HCT116 (cell line): ENCODE measurements at regions of chr6 and their contacts with region 1.

Region 1: DNA sequence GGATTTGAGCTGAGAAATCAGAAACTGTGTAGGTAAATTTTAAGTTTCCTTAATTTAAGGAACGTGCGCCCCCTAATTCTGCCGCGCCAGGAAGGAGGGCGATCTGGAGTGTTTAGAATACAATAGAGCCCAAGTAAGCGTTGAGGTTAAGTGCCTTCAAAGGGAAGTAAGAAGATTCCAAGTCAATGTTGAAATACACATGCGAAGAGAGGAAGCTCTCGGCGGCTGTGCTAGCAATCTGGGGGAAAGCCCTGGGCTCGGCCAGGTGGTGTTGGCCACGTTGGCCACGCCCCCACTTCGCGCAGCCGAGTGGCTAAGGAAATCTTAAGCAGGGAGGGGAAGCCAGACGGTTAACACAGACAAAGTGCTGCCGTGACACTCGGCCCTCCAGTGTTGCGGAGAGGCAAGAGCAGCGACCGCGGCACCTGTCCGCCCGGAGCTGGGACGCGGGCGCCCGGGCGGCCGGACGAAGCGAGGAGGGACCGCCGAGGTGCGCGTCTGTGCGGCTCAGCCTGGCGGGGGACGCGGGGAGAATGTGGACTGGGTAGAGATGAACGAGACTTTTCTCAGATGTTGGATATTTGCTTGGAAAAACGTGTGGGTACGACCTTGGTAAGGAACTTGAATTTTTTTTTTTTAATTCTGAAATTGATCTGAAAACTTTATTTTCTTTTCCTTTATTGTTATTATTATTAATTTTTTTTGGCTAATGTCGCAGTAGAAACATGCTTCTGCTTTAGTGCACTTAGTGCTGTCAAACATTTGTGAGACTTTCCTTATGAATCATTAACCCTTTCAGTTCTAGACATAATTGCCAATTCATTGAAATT is at the start of gene PRDM1:
- DNase-seq: peak; percentile 81
- ATAC-seq: peak; percentile 91
- H3K4me3 ChIP-seq: peak within 1 kb of the TSS; percentile 47 to 57
- H3K27ac ChIP-seq: peak within 1 kb of the TSS; percentile 52
- H3K4me1 ChIP-seq: peaks cover 17 to 31% of the 10 kb centered on the region in 2 experiments
- H3K27me3 ChIP-seq: no peaks in the 10 kb centered on the region
- CTCF ChIP-seq: peak in 2 of 3 experiments; percentile 11 to 28; a peak in 1 of 6 replicates
- POLR2A ChIP-seq: no peak
- RAD21 ChIP-seq: peak; percentile 46
- total RNA-seq, gene PRDM1: 3.4 TPM

Region 2: DNA sequence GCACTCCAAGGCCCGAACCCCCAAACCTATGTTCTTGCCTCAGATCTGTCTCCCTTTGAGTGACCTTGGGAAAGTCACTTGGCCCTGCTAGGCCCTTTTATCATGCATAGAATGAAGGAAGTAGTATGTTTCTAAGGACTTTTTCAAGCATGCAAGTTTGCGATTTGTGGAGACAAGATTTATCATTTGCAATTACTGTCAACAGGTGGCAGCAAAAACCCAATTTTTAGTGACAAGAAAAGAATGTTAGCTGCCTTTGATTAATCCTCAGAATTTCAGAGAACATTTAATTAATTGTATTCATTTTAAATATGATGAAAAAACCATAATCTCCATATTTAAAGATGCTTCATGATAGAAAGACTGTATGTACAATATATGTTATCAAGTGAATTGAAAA is 655.0 kb before region 1 on chr6:
- CTCF ChIA-PET with region 1: interaction called, 6 read pairs
- POLR2A ChIA-PET with region 1: no interaction called
- RAD21 ChIA-PET with region 1: no interaction called
- intact Hi-C with region 1: loop called (anchors 2 kb)
- DNase-seq: peak; percentile 51
- ATAC-seq: 0 out of 2 replicates have a peak, but pooled peaks have one; percentile 33
- H3K4me3 ChIP-seq: no peak overlapping the region
- H3K27ac ChIP-seq: no peak overlapping the region
- H3K4me1 ChIP-seq: peaks cover 12 to 31% of the 10 kb centered on the region in 2 experiments; a peak in 3 of 4 replicates
- H3K27me3 ChIP-seq: no peaks in the 10 kb centered on the region
- CTCF ChIP-seq: peak; percentile 45 to 67 (median 51); a peak in 5 of 6 replicates
- POLR2A ChIP-seq: no peak
- RAD21 ChIP-seq: peak; percentile 75

Region 3: GRCh38 chr6:105484238-105485161 is 601.7 kb before region 1 on chr6:
- CTCF ChIA-PET with region 1: interaction called, 4 read pairs
- POLR2A ChIA-PET with region 1: interaction called, 3 read pairs
- RAD21 ChIA-PET with region 1: no interaction called
- intact Hi-C with region 1: loop called (anchors 1 kb)
- DNase-seq: peak; percentile 42
- ATAC-seq: peak; percentile 78
- H3K4me3 ChIP-seq: no peak overlapping the region
- H3K27ac ChIP-seq: no peak overlapping the region
- H3K4me1 ChIP-seq: no peaks in the 10 kb centered on the region
- H3K27me3 ChIP-seq: no peaks in the 10 kb centered on the region
- CTCF ChIP-seq: peak; percentile 70 to 93 (median 78)
- POLR2A ChIP-seq: no peak
- RAD21 ChIP-seq: peak; percentile 88

Region 4: DNA sequence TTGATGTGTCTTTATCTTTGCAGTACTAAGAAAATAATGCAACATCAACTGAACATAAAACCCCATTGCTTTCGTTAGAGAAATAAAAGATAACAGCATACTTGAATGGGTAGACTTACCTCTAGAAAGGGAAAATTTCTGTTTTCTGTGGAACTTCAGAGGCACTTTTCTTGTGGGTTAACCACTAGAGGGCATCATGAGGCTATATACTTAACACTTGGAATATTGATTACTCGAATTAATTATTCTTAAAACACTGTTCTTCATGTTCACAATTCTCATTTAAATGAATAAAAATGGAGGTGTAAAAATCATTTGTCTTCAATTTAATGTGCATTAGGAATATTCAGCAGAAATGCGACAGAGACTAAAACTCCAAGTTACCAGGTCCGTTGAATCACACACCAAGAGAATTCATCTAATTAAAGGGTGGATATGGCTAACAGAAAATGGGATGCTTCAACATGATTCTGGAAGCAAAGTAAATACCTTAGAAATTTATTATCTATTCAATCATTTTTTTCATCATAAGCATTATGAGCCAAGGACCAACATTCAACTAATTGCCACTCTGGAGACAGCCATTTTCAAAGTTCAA is 352.5 kb before region 1 on chr6:
- CTCF ChIA-PET with region 1: interaction called, 4 read pairs
- POLR2A ChIA-PET with region 1: no interaction called
- RAD21 ChIA-PET with region 1: no interaction called
- intact Hi-C with region 1: loop called (anchors 1 kb)
- DNase-seq: peak; percentile 41
- ATAC-seq: peak; percentile 58; the same call in 1 of the 2 replicates
- H3K4me3 ChIP-seq: no peak overlapping the region
- H3K27ac ChIP-seq: no peak overlapping the region
- H3K4me1 ChIP-seq: no peaks in the 10 kb centered on the region
- H3K27me3 ChIP-seq: no peaks in the 10 kb centered on the region
- CTCF ChIP-seq: peak; percentile 69 to 83 (median 80)
- POLR2A ChIP-seq: no peak
- RAD21 ChIP-seq: peak; percentile 87

Region 5: GRCh38 chr6:105992315-105992961 is 93.8 kb before region 1 on chr6:
- CTCF ChIA-PET with region 1: no interaction called
- POLR2A ChIA-PET with region 1: no interaction called
- RAD21 ChIA-PET with region 1: no interaction called
- intact Hi-C with region 1: loop called (anchors 5 kb)
- DNase-seq: no peak
- ATAC-seq: peak; percentile 82
- H3K4me3 ChIP-seq: peak overlapping the region; percentile 47 to 60
- H3K27ac ChIP-seq: no peak overlapping the region
- H3K4me1 ChIP-seq: peaks cover 0 to 34% of the 10 kb centered on the region in 2 experiments; a peak in 2 of 4 replicates
- H3K27me3 ChIP-seq: no peaks in the 10 kb centered on the region
- CTCF ChIP-seq: no peak
- POLR2A ChIP-seq: no peak
- RAD21 ChIP-seq: no peak

Region 6: GRCh38 chr6:106223300-106223930 is 137.2 kb after region 1 on chr6:
- CTCF ChIA-PET with region 1: interaction called, 40 read pairs
- POLR2A ChIA-PET with region 1: no interaction called
- RAD21 ChIA-PET with region 1: interaction called, 4 to 7 read pairs
- intact Hi-C with region 1: loop called (anchors 1 kb)
- DNase-seq: peak; percentile 72
- ATAC-seq: peak; percentile 85
- H3K4me3 ChIP-seq: no peak overlapping the region
- H3K27ac ChIP-seq: no peak overlapping the region
- H3K4me1 ChIP-seq: no peaks in the 10 kb centered on the region
- H3K27me3 ChIP-seq: no peaks in the 10 kb centered on the region
- CTCF ChIP-seq: peak; percentile 60 to 80 (median 62)
- POLR2A ChIP-seq: no peak
- RAD21 ChIP-seq: peak; percentile 89

Region 7: DNA sequence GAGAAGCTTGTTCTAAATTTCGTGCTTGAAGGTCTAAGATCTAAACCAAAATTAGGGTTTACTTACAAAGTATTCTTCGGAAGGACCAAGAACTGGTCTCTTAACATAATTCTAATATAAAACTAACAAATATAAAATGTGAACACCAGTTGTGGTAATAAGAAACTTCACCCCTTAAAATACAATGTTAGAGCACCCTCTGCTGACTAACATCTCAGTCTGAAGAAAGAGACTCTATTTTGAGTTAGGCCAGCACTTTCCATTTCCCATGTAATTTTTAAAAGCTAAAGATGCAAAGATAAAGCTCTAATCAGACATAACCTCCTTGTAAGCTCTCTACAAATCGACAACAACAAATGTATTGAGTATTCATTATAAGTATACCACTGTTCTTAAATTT is 214.7 kb after region 1 on chr6:
- CTCF ChIA-PET with region 1: interaction called, 11 read pairs
- POLR2A ChIA-PET with region 1: no interaction called
- RAD21 ChIA-PET with region 1: no interaction called
- intact Hi-C with region 1: loop called (anchors 5 kb)
- DNase-seq: no peak
- ATAC-seq: peak; percentile 53; the same call in 1 of the 2 replicates
- H3K4me3 ChIP-seq: no peak overlapping the region
- H3K27ac ChIP-seq: no peak overlapping the region
- H3K4me1 ChIP-seq: peaks cover 0 to 7% of the 10 kb centered on the region in 2 experiments; a peak in 1 of 4 replicates
- H3K27me3 ChIP-seq: no peaks in the 10 kb centered on the region
- CTCF ChIP-seq: peak; percentile 42 to 51 (median 46); a peak in 5 of 6 replicates
- POLR2A ChIP-seq: no peak
- RAD21 ChIP-seq: peak; percentile 68

Region 8: DNA sequence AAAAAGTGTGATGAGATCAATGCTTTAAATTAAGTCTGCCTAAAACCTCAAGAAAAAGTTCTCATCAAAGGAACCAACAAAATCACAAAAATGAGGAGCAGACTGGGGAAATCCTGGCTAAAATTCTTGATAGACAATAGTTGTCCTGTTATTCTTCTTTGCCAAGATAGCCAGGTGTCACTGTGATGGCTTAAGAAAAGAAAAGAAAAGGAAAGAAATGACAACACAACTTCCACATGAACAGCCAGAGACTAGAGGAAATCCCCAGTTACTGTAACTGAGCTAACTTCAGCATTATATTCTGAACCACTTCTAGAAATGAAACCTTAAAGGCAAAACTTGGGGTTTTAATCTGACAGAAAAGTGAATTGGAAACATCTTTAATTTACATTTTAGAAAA is 758.7 kb after region 1 on chr6:
- CTCF ChIA-PET with region 1: no interaction called
- POLR2A ChIA-PET with region 1: no interaction called
- RAD21 ChIA-PET with region 1: no interaction called
- intact Hi-C with region 1: no loop called
- DNase-seq: no peak
- ATAC-seq: no peak
- H3K4me3 ChIP-seq: no peak overlapping the region
- H3K27ac ChIP-seq: no peak overlapping the region
- H3K4me1 ChIP-seq: no peaks in the 10 kb centered on the region
- H3K27me3 ChIP-seq: no peaks in the 10 kb centered on the region
- CTCF ChIP-seq: no peak
- POLR2A ChIP-seq: no peak
- RAD21 ChIP-seq: no peak